Activated T-helper 1 cell treated with anti-CD3 and anti-CD28 coated beads, Interleukin-12 subunit alpha, Interleukin-12 subunit beta, Interleukin-2, Interleukin-4 antibody, amounts not matched to agents 30 ng/mL and 10 ng/mL and 1 ng/mL, durations not matched to agents 14 hours and 24 hours and 36 hours (primary cell): ENCODE measurements at regions of chr16 and their contacts with region 1.

Region 1: GRCh38 chr16:75555707-75556430 is at the start of gene TMEM231:
- DNase-seq: peak; percentile 95
- H3K4me3 Mint-ChIP-seq: peak within 1 kb of the TSS; percentile 92
- H3K27ac Mint-ChIP-seq: peak within 1 kb of the TSS; percentile 89
- H3K4me1 Mint-ChIP-seq: peaks cover 11% of the 10 kb centered on the region
- H3K27me3 Mint-ChIP-seq: peaks cover 7% of the 10 kb centered on the region
- total RNA-seq, gene TMEM231: 4.5 and 4.7 TPM in 2 replicates

Region 2: DNA sequence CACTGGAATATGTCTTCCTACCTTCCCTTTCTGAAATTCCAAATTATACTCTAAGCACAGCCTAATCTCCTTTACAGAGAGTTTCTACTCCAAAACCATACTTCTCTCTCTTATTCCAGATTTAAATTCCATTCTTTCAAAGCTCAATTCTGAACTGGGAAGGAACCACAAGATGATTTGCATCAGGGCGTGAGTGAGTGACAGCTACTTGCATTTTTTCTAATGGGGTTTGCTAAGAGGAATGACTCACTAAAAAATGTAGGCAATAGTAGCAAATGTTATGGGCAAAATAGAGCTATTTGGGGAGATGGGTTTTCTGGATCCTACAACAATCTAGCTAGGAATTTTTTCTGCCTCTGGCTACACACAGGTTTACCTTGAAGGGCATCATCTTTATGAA is 1503.9 kb before region 1 on chr16:
- intact Hi-C with region 1: no loop called
- DNase-seq: no peak
- H3K4me3 Mint-ChIP-seq: no peak overlapping the region
- H3K27ac Mint-ChIP-seq: no peak overlapping the region
- H3K4me1 Mint-ChIP-seq: no peaks in the 10 kb centered on the region
- H3K27me3 Mint-ChIP-seq: no peaks in the 10 kb centered on the region

Region 3: DNA sequence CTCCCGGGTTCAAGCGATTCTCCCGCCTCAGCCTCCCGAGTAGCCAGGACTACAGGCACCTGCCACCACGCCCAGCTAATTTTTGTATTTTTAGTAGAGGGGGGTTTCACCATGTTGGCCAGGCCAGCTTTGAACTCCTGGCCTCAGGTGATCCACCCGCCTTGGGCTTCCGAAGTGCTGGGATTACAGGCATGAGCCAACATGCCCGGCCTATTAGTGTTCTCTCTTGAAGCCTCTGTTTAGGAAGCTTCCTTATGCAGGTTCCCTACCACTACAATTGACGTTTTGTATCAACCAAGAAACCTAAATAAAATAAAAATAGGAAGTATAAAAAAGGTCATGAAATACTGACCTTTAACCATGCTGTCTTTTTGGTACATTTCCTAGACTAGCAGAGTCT is 36.0 kb before region 1 on chr16:
- intact Hi-C with region 1: loop called (anchors 1 kb)
- DNase-seq: no peak
- H3K4me3 Mint-ChIP-seq: no peak overlapping the region
- H3K27ac Mint-ChIP-seq: no peak overlapping the region
- H3K4me1 Mint-ChIP-seq: peaks cover 5% of the 10 kb centered on the region
- H3K27me3 Mint-ChIP-seq: peaks cover 5% of the 10 kb centered on the region